Activated T-helper 2 cell treated with anti-CD3 and anti-CD28 coated beads, Interferon-gamma antibody, Interleukin-2, Interleukin-4, amounts not matched to agents 10 μg/mL and 5 μg/mL and 100 μg/mL, durations not matched to agents 14 hours and 24 hours and 36 hours (primary cell): ENCODE measurements at regions of chr2 and their contacts with region 1.

Region 1: DNA sequence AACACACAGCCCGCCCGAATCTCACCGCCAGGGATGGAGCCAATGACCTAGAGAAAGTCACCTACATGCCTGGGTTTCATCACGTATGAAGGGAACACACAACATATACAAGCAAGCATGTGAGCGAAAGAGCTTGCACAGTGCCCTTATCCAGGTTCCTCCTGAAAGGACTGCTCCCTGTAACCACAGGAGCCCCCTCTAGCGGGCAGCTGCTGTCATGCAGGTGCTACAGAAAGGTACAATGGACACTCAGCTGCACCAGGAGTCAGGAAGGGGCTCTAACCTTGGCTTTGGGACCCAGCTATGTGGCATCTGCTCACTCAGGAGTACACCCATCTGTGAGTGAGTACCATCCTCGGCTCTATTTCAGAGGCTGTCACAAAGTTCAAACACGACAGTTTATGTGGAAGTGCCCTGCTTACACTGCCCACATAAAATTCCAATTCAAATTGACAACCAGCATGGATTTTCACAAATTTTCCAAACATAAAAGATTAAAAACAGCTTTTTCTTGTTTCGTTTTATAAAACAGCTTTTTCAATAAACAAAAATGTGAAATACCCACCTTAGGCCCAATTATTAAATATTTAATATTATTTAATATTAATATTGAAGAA is 3.5 kb downstream of the NDUFA10 start:
- DNase-seq: peak; percentile 48
- H3K4me3 Mint-ChIP-seq: no peak overlapping the region
- H3K27ac Mint-ChIP-seq: no peak overlapping the region
- H3K4me1 Mint-ChIP-seq: peaks cover 19% of the 10 kb centered on the region
- H3K27me3 Mint-ChIP-seq: no peaks in the 10 kb centered on the region

Region 2: GRCh38 chr2:240136013-240136670 is 114.5 kb after region 1 on chr2 and contains the start of gene COPS9:
- intact Hi-C with region 1: loop called (anchors 10 kb)
- DNase-seq: peak; percentile 81
- H3K4me3 Mint-ChIP-seq: peak within 1 kb of the TSS; percentile 96
- H3K27ac Mint-ChIP-seq: peak within 1 kb of the TSS; percentile 82
- H3K4me1 Mint-ChIP-seq: peaks cover 17% of the 10 kb centered on the region
- H3K27me3 Mint-ChIP-seq: no peaks in the 10 kb centered on the region
- total RNA-seq, gene COPS9: 112 and 114 TPM in 2 replicates